ENCODE measurements at regions of chr21 and their contacts with region 1.

Region 1: DNA sequence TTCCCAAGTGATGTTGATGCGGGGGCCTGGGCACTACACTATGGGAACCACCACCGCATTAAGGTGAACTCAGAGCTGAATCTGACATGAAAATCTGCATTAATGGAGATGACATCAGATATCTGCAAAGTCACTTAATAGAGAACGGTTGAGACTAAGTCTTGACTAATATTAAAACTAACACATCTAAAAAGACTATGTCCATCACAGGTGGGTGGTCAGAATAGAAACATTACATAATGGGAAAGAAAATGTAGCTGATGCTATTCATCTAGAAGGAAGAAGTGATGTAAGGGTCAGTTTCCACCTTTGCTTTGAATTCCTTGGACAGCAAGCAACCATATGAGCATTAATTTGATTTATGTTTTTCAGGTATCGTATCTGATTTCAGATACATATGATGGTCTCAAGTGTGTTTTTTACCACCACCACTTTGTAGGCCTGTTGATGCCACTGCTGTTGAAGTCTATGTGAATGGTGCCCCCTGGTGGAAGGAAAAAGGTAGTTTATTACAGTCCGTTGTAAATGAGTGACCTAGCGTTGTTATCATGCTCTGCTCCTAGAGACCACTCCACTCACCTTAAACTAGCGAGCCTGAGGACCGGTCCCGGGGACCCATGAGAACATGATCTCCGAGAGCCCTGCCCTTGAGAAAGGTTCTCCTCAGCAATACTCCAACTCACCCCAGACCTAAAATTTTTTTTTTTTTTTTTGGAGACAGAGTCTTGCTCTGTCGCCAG is 73.5 kb downstream of the BACH1 start:
- DNase-seq: peak; percentile 40 to 41
- H3K4me3 ChIP-seq: no peak overlapping the region
- H3K27ac ChIP-seq: no peak overlapping the region
- H3K4me1 ChIP-seq: no peaks in the 10 kb centered on the region
- H3K27me3 ChIP-seq: no peaks in the 10 kb centered on the region
- CTCF ChIP-seq: peak; percentile 44 to 84 (median 74)
- POLR2A ChIP-seq: no peak

Region 2: GRCh38 chr21:29085106-29085752 is 287.0 kb before region 1 on chr21:
- intact Hi-C with region 1: loop called (anchors 5 kb)
- DNase-seq: no peak
- H3K4me3 ChIP-seq: no peak overlapping the region
- H3K27ac ChIP-seq: no peak overlapping the region
- H3K4me1 ChIP-seq: peaks cover 9% of the 10 kb centered on the region in 2 donors
- H3K27me3 ChIP-seq: no peaks in the 10 kb centered on the region
- CTCF ChIP-seq: no peak
- POLR2A ChIP-seq: no peak

Region 3: DNA sequence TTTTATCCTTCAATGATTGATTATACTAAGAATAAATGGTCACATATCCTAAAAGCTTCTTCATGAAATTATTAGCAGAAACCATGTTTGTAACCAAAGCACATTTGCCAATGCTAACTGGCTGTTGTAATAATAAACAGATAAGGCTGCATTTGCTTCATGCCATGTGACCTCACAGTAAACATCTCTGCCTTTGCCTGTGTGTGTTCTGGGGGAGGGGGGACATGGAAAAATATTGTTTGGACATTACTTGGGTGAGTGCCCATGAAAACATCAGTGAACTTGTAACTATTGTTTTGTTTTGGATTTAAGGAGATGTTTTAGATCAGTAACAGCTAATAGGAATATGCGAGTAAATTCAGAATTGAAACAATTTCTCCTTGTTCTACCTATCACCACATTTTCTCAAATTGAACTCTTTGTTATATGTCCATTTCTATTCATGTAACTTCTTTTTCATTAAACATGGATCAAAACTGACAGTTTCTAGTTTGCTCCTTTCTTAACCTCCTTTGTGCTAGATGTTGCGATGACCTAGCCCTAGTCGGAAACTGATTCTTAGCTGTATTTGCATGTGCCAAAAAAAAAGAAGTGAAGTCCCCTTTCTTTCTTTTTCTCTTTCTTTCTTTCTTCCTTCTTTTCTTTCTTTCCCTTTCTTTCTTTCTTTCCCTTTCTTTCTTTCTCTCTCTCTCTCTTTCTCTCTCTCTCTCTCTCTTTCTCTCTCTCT is 196.7 kb before region 1 on chr21:
- intact Hi-C with region 1: loop called (anchors 10 kb)
- DNase-seq: no peak
- H3K4me3 ChIP-seq: no peak overlapping the region
- H3K27ac ChIP-seq: no peak overlapping the region
- H3K4me1 ChIP-seq: peaks cover 0 to 9% of the 10 kb centered on the region in 2 donors
- H3K27me3 ChIP-seq: no peaks in the 10 kb centered on the region
- CTCF ChIP-seq: no peak
- POLR2A ChIP-seq: no peak